Cardiac septum (tissue), 1 donor: ENCODE measurements at regions of chr20 and their contacts with region 1.

Region 1: DNA sequence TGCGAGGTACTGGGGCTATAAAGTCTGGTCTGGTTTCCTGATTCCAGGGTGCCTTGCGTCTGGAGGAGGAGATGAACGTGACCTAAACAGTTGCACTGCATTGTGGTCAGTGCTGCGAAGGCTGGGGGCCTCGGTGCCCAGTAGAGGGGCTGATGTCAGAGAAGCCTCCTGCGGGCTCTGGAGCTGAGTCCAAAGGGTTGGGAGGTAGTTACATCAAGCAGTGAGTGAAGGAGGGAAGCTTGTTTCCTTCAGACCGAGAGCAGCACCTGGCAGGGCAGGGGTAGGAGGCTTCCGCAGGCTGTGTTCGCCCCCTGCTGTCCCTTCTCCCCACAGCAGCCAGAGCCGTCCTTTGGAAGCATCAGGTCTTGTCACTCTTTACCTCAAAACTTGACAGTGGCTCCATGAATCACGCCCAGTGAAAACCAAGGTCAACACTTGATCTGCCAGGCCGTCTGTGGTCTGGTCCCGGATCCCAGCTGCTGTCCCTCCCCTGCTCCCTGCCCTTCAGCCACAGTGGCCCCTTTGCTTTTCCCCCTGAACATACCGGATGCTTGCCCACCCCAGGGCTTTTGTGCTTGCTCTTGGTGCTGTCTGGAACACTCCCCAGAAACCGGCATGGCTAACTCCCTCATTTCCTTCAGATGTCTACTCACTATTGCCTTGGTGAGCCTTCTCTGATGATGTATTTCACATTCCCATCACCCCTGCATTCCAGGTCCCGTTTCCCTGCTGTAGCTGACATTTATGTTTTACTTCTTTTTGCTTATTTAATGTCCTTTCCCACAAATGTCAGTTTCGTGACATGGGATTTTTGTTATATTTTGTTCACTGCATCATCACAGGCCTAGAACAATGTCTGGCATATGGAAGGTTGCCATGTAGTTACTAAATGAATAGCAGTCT is 7.0 kb downstream of the DYNLRB1 start:
- DNase-seq: no peak

Region 2: DNA sequence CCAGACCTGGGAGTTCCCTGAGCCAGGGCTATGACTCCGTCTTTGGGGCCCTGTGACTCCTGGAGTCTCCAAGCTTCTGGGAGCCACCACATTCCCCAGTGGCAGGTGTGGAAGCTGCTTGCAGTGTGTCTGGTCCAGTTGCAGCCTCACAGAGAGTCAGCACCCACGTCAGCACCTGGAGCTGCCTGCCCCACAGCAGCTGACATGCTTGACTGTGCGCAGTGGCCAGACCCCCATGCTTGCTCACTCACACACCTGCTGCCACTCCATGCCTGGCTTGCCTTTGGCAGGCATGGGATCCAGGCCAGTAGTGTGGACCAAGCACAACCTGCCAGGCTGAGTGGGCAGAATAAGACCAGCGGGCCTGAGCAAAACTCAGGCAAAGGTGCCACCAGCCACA is 312.9 kb before region 1 on chr20:
- intact Hi-C with region 1: no loop called
- DNase-seq: no peak

Region 3: DNA sequence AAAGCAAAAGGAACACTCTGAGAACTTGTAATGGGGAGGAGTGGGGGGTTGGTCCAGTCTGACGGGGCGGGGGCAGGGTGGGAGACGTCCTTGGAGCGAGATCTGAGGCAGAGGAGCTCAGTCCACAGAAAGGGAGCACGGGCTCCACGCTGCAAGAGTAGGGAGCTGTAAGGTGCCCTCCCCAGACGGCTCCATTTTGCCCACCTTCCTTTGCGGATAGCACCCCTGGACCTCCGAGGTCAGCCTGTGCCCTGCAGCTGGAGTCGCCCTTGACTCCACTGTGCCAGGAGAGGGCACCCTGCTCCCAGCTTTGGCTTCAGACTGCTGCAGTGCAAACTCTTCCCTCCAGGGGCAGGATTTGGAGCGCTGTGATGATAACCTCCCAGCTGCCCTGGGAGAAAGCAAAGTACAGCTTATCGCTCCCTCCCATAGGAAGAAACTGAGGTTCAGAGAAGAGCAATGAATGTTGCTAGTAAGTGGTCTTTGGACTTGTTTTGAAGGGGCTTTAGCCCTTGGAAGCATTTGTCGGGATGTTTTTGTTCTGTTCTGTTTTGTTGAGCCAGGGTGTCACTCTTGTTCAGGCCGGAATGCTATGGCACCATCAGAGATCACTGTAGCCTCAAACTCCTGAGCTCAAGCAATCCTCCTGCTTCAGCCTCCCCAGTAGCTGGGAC is 210.5 kb before region 1 on chr20:
- intact Hi-C with region 1: loop called (anchors 5 kb)
- DNase-seq: peak; percentile 95

Region 4: GRCh38 chr20:34426026-34426425 is 97.2 kb before region 1 on chr20:
- intact Hi-C with region 1: no loop called
- DNase-seq: no peak

Region 5: DNA sequence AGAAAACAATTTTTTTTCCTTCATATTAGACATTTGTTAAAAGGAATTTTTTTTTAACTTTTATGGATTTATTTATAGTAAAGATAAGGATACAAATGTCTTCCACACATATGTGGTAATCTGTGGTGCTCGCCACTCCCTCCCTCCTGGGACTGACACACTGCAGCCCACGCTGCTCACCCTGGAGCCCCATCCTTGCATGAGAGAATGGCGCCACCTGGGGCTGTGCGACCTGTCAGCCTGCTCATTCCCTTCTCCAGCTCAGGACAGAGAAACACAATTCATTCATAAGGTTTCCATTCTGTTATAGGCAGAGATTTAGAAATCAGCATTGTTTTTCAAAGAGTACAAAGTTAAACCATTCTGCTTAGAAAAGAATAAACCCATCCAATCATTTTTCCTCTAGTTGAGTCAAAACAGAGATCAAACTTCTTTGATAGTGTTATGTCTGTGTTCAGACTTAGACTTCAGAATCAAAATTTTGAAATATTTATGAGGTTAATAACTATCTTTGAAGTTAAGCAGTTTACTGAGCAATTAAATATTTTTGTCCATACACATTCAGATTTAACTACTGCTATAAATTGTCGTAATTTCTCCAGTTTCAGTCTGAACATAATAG is 49.8 kb before region 1 on chr20:
- intact Hi-C with region 1: loop called (anchors 5 kb)
- DNase-seq: no peak

Region 6: DNA sequence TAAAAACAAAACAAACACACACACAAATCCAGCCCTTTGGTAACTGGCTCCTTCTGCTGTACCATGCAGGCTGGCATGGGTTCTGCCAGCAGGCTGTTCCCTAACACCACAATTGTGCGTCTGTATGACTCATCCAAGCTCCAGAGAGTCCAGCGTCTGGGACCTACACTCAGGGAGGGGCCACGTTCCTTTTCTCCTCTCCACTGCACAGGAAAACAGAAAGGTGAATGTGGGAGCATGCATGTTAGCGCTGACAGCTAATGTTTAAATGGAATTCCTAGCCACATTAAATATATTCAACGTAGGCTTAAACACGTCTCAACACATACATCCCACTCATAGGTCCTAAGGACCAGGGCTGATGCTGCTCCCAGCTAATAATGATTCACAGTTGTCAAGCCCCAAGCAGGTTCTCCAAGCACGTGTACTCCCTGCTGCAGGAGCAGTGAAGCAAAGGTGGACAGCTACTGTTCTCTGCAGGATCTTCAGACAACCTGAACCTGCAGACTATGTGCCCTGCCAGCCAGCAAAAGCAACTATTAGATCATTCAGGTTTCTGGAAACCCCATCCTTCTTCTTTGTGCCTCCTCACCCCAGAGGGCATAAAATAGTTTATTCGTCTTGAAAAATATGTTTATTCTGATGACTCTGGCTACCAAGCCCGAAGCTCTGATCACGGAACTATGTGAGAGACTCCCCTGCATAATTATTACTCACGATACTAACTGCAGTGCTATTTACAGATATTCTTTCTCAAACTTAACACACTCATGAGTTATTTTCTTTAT is 56.2 kb after region 1 on chr20:
- intact Hi-C with region 1: loop called (anchors 5 kb)
- DNase-seq: no peak

Region 7: GRCh38 chr20:34663213-34663943 is 140.2 kb after region 1 on chr20:
- intact Hi-C with region 1: no loop called
- DNase-seq: no peak